ENCODE measurements at regions of chr1 and their contacts with region 1.

Region 1: DNA sequence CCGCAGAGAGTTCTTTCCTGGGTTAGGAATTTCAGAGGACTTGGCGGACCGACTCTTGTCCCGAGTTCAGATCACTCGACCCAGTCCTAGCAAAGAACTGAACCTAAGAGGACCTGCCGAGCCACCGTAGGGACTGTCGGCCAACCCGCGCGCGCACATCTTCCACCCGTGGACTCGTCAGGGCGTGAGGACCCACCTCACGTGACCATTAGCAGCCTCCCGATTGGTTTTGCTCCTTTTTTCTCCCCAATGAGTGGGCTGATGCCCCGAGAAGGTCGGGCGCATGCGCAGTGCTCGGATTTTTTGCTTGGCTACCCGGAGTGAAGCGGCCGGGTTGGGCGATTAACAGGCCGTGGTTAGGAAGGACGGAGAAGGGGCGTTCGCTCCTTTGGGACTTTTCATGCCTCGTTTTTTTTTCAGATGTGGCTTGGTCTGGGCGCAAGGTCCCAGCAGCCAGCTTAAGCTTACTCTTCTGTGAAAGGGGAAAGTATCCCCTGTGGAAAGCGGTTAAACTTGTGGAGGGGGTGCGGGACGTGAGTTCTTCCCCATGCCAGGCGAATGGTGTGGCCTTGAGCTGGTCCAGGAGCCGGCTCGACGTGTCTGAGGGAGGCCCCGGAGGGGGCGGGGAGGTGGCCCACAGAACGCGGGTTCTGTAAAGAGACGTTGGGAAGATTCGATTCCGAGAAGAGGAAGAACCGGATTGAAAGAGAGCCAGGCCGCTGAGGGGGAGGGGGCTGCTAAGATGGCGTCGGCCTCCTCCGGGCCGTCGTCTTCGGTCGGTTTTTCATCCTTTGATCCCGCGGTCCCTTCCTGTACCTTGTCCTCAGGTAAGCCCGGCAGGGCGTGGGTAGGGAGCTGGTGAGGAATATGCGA is at the start of gene PIP5K1A:
- DNase-seq: peak; percentile 99
- ATAC-seq: peak; percentile 85 to 92 (median 90)
- H3K4me3 ChIP-seq: peak within 1 kb of the TSS; percentile 74 to 83 (median 81)
- H3K27ac ChIP-seq: peak within 1 kb of the TSS; percentile 59 to 78 (median 73)
- H3K4me1 ChIP-seq: peaks cover 0 to 21% (median 0%) of the 10 kb centered on the region in 4 donors
- H3K27me3 ChIP-seq: no peaks in the 10 kb centered on the region
- CTCF ChIP-seq: no peak
- POLR2A ChIP-seq: peak; percentile 77
- total RNA-seq, gene PIP5K1A: 13.9 to 22.1 (median 17.2) TPM

Region 2: DNA sequence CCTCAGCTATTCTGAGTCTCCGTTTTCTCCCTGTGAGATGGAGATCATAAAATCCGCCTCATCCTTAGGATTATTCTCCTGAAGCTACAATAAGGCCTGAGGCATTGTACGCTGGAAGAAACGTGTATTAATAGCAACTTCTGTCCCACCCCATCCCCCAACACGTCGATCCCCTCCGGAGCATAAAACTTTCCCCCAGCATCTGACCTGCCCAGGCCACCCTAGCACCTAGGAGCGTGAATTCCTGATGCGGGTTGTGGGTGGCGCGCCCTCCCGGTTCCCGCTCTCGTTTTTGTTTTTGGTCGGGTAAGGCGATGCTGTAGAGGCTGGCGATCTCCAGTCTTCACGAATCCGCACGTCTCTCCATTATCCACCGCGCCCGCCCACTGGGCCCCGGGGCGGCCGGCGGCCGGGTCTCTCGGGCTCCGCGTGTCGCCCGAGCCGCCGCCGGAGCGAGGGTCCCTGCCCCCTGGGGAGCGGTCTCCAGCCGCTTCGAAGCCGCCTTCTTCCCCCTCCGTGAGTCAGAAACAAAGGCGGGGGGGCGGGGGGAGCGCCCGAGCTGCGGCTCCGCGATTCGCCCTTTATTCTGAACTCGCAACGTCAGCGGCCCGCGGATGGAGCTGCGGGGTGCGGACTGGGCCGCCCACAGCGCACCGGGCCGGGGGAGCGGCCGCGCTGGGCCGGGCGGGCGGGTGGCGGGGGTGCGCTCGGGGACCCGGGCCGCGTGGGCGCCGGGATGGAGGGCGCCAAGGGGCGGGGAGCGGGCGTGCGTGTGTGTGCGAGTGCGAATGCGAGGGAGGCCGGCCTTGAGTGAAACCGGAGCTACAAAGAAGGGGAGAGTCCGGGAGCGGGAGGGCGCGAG is 1049.0 kb before region 1 on chr1 and contains the start of gene PLEKHO1:
- intact Hi-C with region 1: no loop called
- DNase-seq: peak; percentile 77 to 89 (median 84)
- ATAC-seq: peak; percentile 74 to 82 (median 76)
- H3K4me3 ChIP-seq: peak within 1 kb of the TSS; percentile 47 to 56 (median 53)
- H3K27ac ChIP-seq: peak within 1 kb of the TSS; percentile 66 to 82 (median 78)
- H3K4me1 ChIP-seq: peaks cover 0 to 2% (median 0%) of the 10 kb centered on the region in 4 donors
- H3K27me3 ChIP-seq: no peaks in the 10 kb centered on the region
- CTCF ChIP-seq: no peak
- POLR2A ChIP-seq: peak; percentile 68
- total RNA-seq, gene PLEKHO1: 3.4 to 11.7 (median 5.3) TPM

Region 3: DNA sequence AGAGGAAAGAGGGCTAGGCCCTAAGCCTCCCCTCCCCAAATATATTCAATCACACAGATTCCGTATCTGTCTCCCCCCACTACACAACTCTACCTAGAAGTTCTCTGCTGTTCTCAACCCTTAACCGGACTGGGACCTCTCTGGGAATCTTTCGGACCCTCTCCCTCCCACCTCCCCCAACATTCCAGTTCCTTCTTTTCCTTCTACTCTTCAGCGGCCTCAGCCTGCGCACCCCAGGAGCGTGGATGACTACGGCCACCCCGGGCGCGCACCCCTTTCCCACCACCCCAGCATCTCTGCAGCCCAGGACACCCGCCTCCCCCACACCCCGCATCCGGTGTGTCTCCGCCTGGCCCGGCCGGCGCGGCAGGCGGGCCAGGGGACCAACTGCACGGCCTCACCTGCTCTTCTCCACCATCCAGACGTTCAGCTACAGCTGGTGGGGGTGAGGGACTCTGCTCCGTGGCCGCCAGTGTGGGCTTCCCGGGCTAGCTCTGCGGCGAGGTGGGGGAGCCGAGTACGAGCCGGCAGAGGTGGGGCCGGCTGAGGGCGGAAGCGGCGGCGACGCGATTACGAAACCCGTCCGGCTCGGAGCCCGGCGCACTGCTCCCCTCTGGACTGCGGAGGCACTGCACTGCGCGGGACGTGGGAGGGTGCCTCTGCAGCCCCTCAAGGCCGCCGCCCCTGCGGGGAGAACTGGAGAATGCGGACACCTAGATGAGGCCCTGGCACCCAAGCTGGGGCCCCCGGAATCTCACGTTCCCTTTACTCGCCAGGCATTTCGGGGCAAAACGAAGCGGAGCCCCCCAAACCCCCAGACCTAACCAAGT is 139.2 kb before region 1 on chr1 and contains the start of gene CDC42SE1:
- intact Hi-C with region 1: no loop called
- DNase-seq: peak; percentile 83 to 89 (median 88)
- ATAC-seq: peak; percentile 86 to 94 (median 92)
- H3K4me3 ChIP-seq: peak within 1 kb of the TSS; percentile 78 to 95 (median 92)
- H3K27ac ChIP-seq: peak within 1 kb of the TSS; percentile 73 to 93 (median 87)
- H3K4me1 ChIP-seq: peaks cover 0 to 18% (median 4%) of the 10 kb centered on the region in 4 donors
- H3K27me3 ChIP-seq: no peaks in the 10 kb centered on the region
- CTCF ChIP-seq: peak; percentile 78 to 87 (median 84)
- POLR2A ChIP-seq: peak; percentile 93
- total RNA-seq, gene CDC42SE1: 15.9 to 37.5 (median 27.3) TPM

Region 4: GRCh38 chr1:151222130-151222529 is 23.6 kb after region 1 on chr1:
- intact Hi-C with region 1: no loop called
- DNase-seq: no peak
- ATAC-seq: peak in 2 of 4 donors; percentile 25 to 62
- H3K4me3 ChIP-seq: no peak overlapping the region
- H3K27ac ChIP-seq: no peak overlapping the region
- H3K4me1 ChIP-seq: no peaks in the 10 kb centered on the region
- H3K27me3 ChIP-seq: no peaks in the 10 kb centered on the region
- CTCF ChIP-seq: no peak
- POLR2A ChIP-seq: no peak

Region 5: GRCh38 chr1:151246786-151247185 is 48.3 kb after region 1 on chr1:
- intact Hi-C with region 1: loop called in 1 of 2 experiments (anchors 5 kb)
- DNase-seq: no peak
- ATAC-seq: no peak
- H3K4me3 ChIP-seq: no peak overlapping the region
- H3K27ac ChIP-seq: no peak overlapping the region
- H3K4me1 ChIP-seq: no peaks in the 10 kb centered on the region
- H3K27me3 ChIP-seq: no peaks in the 10 kb centered on the region
- CTCF ChIP-seq: no peak
- POLR2A ChIP-seq: no peak

Region 6: DNA sequence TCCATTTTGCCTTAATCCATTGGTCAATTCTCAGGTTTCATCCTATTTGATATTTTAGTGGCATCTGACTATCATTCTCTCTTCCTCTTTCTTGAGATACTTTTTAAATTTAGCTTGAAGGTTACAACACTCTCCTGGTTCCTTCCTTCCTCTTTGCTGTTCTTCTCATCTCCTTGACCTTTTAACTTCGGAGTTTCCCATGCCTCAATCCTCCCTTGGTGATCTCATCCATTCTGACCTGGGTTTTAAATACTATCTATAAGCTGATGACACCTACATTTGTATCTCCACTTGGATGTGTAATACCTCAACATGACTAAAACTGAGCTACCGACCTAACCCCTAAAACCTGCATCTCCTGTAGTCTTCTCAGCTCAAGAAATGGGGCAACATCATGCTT is 78.8 kb after region 1 on chr1:
- intact Hi-C with region 1: loop called in 1 of 2 experiments (anchors 10 kb)
- DNase-seq: no peak
- ATAC-seq: no peak
- H3K4me3 ChIP-seq: no peak overlapping the region
- H3K27ac ChIP-seq: no peak overlapping the region
- H3K4me1 ChIP-seq: peaks cover 0 to 4% (median 2%) of the 10 kb centered on the region in 4 donors
- H3K27me3 ChIP-seq: no peaks in the 10 kb centered on the region
- CTCF ChIP-seq: no peak
- POLR2A ChIP-seq: no peak